ENCODE measurements at regions of chr10 and their contacts with region 1.

Region 1: GRCh38 chr10:112949875-112950507 is at the start of gene TCF7L2:
- DNase-seq: peak in 1 of 2 donors; percentile 99
- H3K4me3 ChIP-seq: peak within 1 kb of the TSS; percentile 78 to 85
- H3K27ac ChIP-seq: peak within 1 kb of the TSS; percentile 95
- H3K4me1 ChIP-seq: peaks cover 38% of the 10 kb centered on the region
- H3K27me3 ChIP-seq: no peaks in the 10 kb centered on the region
- CTCF ChIP-seq: no peak
- POLR2A ChIP-seq: peak in 1 of 2 donors; percentile 85
- total RNA-seq, gene TCF7L2: 44.4 TPM

Region 2: DNA sequence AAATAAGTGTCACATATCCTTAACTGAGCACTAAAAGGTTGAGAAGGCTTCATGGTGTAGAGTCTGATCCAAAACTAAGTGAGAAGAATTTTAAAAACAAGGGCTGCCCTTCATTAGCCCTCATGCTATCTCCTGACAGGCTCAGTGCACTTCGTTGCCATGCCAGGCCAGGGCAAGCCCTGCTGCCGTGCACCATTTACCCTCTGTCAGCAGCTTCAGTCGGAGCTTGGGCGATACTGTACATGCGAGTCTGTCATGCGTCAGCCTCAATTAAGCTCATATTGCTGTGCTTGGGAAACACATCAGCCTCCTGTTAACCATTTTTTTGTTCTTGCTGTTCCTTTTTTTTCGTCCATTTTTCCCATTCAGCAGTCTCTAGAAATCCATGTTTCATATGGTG is 336.4 kb before region 1 on chr10:
- intact Hi-C with region 1: no loop called
- DNase-seq: no peak
- H3K4me3 ChIP-seq: no peak overlapping the region
- H3K27ac ChIP-seq: no peak overlapping the region
- H3K4me1 ChIP-seq: no peaks in the 10 kb centered on the region
- H3K27me3 ChIP-seq: no peaks in the 10 kb centered on the region
- CTCF ChIP-seq: no peak
- POLR2A ChIP-seq: no peak

Region 3: GRCh38 chr10:113027574-113028455 is 77.8 kb after region 1 on chr10:
- intact Hi-C with region 1: loop called (anchors 10 kb)
- DNase-seq: no peak
- H3K4me3 ChIP-seq: peak overlapping the region; percentile 3 to 9
- H3K27ac ChIP-seq: peak overlapping the region; percentile 52
- H3K4me1 ChIP-seq: peaks cover 53% of the 10 kb centered on the region
- H3K27me3 ChIP-seq: no peaks in the 10 kb centered on the region
- CTCF ChIP-seq: no peak
- POLR2A ChIP-seq: no peak

Region 4: DNA sequence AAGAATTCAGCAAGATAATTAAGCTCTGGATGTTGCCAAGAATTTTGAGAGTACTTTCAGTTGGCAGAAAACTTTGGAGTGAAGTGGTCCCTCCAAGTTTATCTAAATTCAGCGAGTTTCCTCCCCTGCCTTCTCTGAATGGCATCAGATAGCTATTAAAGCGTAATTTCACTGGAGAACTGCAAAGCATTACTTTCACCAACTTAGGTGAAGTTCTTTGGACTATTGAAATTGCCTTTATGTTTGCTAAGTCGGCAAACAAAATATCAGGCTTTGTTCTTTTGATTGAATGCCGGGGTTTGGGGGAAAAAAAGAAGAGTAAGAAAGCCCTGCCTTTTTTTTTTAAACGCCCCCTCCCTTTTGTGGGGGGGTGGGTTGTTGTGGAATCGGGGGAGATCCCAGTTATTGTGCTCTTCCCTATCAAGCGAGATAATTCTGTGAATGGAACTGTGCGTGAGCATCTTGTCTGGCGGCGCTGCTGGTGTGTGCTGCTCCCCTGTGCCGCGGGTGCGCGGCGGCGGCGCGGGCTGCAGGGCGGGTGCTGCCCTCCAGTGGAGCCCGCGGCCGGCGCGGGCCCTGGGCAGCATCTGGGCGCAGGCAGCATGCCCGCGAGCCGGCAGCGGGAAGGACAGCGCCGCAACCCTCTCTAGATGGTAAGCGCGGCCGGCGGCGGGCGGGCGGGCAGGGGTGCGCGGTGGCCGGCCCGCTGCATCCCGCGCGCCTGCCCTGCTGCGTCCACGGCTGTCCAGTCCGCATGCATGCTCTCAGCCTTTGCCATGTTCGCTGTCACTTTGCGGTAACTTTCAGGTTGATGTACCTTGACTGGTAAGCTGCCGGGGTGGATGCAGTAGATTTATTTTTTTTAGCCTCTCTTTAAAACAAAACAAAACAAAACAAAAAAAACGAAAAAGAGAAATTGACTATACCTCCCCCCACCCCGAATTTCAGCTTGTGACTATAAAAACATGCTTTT is 176.5 kb after region 1 on chr10:
- intact Hi-C with region 1: loop called (anchors 10 kb)
- DNase-seq: no peak
- H3K4me3 ChIP-seq: peak overlapping the region; percentile 32 to 58
- H3K27ac ChIP-seq: no peak overlapping the region
- H3K4me1 ChIP-seq: peaks cover 9% of the 10 kb centered on the region
- H3K27me3 ChIP-seq: no peaks in the 10 kb centered on the region
- CTCF ChIP-seq: peak; percentile 33 to 75 (median 49)
- POLR2A ChIP-seq: no peak

Measured in vagina (tissue), 2 donors.